IMR-90 (cell line): ENCODE measurements at regions of chr17 and their contacts with region 1.

Region 1: DNA sequence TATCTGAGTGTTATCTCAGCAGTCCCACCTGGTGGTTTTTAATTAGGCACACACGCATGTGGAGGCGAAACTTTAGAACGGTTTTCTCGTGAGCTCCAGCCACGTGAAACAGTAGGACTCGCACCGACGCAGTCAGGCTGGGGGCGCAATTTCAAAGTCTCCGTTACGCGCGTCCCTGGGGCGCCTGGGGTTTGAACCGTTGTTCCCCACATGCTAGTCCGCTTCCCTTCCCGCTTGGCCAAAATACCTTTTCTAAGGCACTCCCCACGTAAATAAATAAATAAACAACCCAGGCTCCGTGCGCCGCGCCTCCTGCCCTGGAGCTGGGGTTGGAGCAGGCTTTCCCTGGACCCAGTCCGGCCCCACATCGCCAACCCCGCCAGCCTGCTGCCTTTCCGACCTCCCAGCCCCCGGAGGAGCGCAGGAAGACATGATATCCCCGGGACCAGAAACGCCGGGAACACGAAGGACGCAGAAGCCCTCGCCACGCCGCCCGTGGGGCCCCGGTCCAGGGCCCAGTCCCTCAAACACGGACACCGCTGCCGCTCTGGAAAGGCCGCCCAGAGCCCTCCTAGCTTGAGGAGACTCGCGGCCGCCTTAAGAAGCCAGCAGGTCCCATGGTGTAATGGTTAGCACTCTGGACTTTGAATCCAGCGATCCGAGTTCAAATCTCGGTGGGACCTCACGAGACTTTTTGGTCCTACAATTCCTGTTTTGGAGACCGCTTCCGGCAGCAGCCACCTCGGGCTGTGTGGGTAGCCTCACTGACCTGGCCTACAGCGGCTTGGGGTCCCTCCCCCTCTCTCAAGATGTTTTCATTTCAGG is 18.2 kb downstream of the GNGT2 start:
- DNase-seq: peak; percentile 77
- ATAC-seq: peak; percentile 86
- H3K4me3 ChIP-seq: peak overlapping the region; percentile 66
- H3K27ac ChIP-seq: peak overlapping the region; percentile 82
- H3K4me1 ChIP-seq: no peaks in the 10 kb centered on the region
- H3K27me3 ChIP-seq: no peaks in the 10 kb centered on the region
- CTCF ChIP-seq: peak; percentile 35; the same call in 1 of the 2 replicates
- POLR2A ChIP-seq: peak; percentile 55; the same call in 1 of the 2 replicates
- RAD21 ChIP-seq: no peak

Region 2: GRCh38 chr17:49035470-49036269 is 156.5 kb before region 1 on chr17:
- CTCF ChIA-PET with region 1: no interaction called
- POLR2A ChIA-PET with region 1: no interaction called
- dilution Hi-C with region 1: no loop called
- in situ Hi-C with region 1: no loop called
- intact Hi-C with region 1: no loop called
- DNase-seq: peak; percentile 17
- ATAC-seq: peak; percentile 65
- H3K4me3 ChIP-seq: no peak overlapping the region
- H3K27ac ChIP-seq: no peak overlapping the region
- H3K4me1 ChIP-seq: no peaks in the 10 kb centered on the region
- H3K27me3 ChIP-seq: no peaks in the 10 kb centered on the region
- CTCF ChIP-seq: peak; percentile 56
- POLR2A ChIP-seq: no peak
- RAD21 ChIP-seq: peak; percentile 56

Region 3: DNA sequence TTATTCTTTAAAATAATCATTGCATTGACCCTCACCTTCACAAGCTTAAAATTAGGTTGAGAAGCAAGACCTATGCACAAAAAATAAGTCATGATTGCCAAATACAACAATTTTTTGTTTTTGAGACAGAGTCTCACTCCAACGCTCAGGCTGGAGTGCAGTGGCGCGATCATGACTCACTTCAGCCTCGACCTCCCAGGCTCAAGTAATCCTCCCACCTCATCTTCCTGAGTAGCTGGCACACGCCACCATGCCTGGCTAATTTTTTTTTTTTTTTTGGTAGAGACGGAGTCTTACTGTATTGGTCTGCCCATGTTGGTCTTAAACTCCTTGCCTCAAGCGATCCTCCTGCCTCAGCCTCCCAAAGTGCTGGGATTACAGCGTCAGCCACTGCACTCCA is 145.8 kb after region 1 on chr17:
- CTCF ChIA-PET with region 1: no interaction called
- POLR2A ChIA-PET with region 1: no interaction called
- dilution Hi-C with region 1: no loop called
- in situ Hi-C with region 1: no loop called
- intact Hi-C with region 1: no loop called
- DNase-seq: peak; percentile 70
- ATAC-seq: no peak
- H3K4me3 ChIP-seq: no peak overlapping the region
- H3K27ac ChIP-seq: no peak overlapping the region
- H3K4me1 ChIP-seq: peaks cover 14% of the 10 kb centered on the region
- H3K27me3 ChIP-seq: no peaks in the 10 kb centered on the region
- CTCF ChIP-seq: no peak
- POLR2A ChIP-seq: no peak
- RAD21 ChIP-seq: no peak

Region 4: GRCh38 chr17:50064258-50065001 is 872.3 kb after region 1 on chr17:
- CTCF ChIA-PET with region 1: no interaction called
- POLR2A ChIA-PET with region 1: no interaction called
- dilution Hi-C with region 1: no loop called
- in situ Hi-C with region 1: no loop called
- intact Hi-C with region 1: loop called (anchors 10 kb)
- DNase-seq: peak; percentile 97
- ATAC-seq: peak; percentile 85
- H3K4me3 ChIP-seq: no peak overlapping the region
- H3K27ac ChIP-seq: peak overlapping the region; percentile 94
- H3K4me1 ChIP-seq: peaks cover 55% of the 10 kb centered on the region
- H3K27me3 ChIP-seq: no peaks in the 10 kb centered on the region
- CTCF ChIP-seq: no peak
- POLR2A ChIP-seq: 0 out of 2 replicates have a peak, but pooled peaks have one; percentile 42
- RAD21 ChIP-seq: peak; percentile 43